ENCODE measurements at regions of chr11 and their contacts with region 1.

Region 1: GRCh38 chr11:33065445-33066178 is 26.2 kb downstream of the TCP11L1 start:
- DNase-seq: peak; percentile 95
- H3K4me3 ChIP-seq: no peak overlapping the region
- H3K27ac ChIP-seq: no peak overlapping the region
- H3K4me1 ChIP-seq: peaks cover 30% of the 10 kb centered on the region
- H3K27me3 ChIP-seq: no peaks in the 10 kb centered on the region
- CTCF ChIP-seq: peak; percentile 100

Region 2: GRCh38 chr11:32751381-32751780 is 314.2 kb before region 1 on chr11:
- CTCF ChIA-PET with region 1: interaction called, 3 read pairs
- POLR2A ChIA-PET with region 1: no interaction called
- intact Hi-C with region 1: loop called (anchors 2 kb)
- DNase-seq: no peak
- H3K4me3 ChIP-seq: no peak overlapping the region
- H3K27ac ChIP-seq: no peak overlapping the region
- H3K4me1 ChIP-seq: no peaks in the 10 kb centered on the region
- H3K27me3 ChIP-seq: peaks cover 8% of the 10 kb centered on the region
- CTCF ChIP-seq: no peak

Region 3: GRCh38 chr11:32809313-32809712 is 256.3 kb before region 1 on chr11:
- CTCF ChIA-PET with region 1: interaction called, 9 read pairs
- POLR2A ChIA-PET with region 1: no interaction called
- intact Hi-C with region 1: loop called (anchors 1 kb)
- DNase-seq: peak; percentile 94
- H3K4me3 ChIP-seq: no peak overlapping the region
- H3K27ac ChIP-seq: no peak overlapping the region
- H3K4me1 ChIP-seq: no peaks in the 10 kb centered on the region
- H3K27me3 ChIP-seq: no peaks in the 10 kb centered on the region
- CTCF ChIP-seq: peak; percentile 99

Region 4: GRCh38 chr11:32870676-32871075 is 194.9 kb before region 1 on chr11:
- CTCF ChIA-PET with region 1: no interaction called
- POLR2A ChIA-PET with region 1: no interaction called
- intact Hi-C with region 1: loop called (anchors 1 kb)
- DNase-seq: peak; percentile 77
- H3K4me3 ChIP-seq: no peak overlapping the region
- H3K27ac ChIP-seq: no peak overlapping the region
- H3K4me1 ChIP-seq: no peaks in the 10 kb centered on the region
- H3K27me3 ChIP-seq: peaks cover 12% of the 10 kb centered on the region
- CTCF ChIP-seq: peak; percentile 89

Region 5: GRCh38 chr11:32893343-32894148 is 172.1 kb before region 1 on chr11:
- CTCF ChIA-PET with region 1: interaction called, 6 read pairs
- POLR2A ChIA-PET with region 1: no interaction called
- intact Hi-C with region 1: loop called (anchors 5 kb)
- DNase-seq: peak; percentile 86
- H3K4me3 ChIP-seq: peak overlapping the region; percentile 77
- H3K27ac ChIP-seq: peak overlapping the region; percentile 85
- H3K4me1 ChIP-seq: peaks cover 32% of the 10 kb centered on the region
- H3K27me3 ChIP-seq: no peaks in the 10 kb centered on the region
- CTCF ChIP-seq: peak; percentile 81

Region 6: GRCh38 chr11:32960553-32961164 is 105.0 kb before region 1 on chr11:
- CTCF ChIA-PET with region 1: interaction called, 5 read pairs
- POLR2A ChIA-PET with region 1: no interaction called
- intact Hi-C with region 1: loop called (anchors 1 kb)
- DNase-seq: peak; percentile 87
- H3K4me3 ChIP-seq: no peak overlapping the region
- H3K27ac ChIP-seq: no peak overlapping the region
- H3K4me1 ChIP-seq: no peaks in the 10 kb centered on the region
- H3K27me3 ChIP-seq: no peaks in the 10 kb centered on the region
- CTCF ChIP-seq: peak; percentile 96

Region 7: GRCh38 chr11:33110083-33110482 is 44.5 kb after region 1 on chr11:
- CTCF ChIA-PET with region 1: no interaction called
- POLR2A ChIA-PET with region 1: interaction called, 10 read pairs
- intact Hi-C with region 1: no loop called
- DNase-seq: no peak
- H3K4me3 ChIP-seq: no peak overlapping the region
- H3K27ac ChIP-seq: no peak overlapping the region
- H3K4me1 ChIP-seq: no peaks in the 10 kb centered on the region
- H3K27me3 ChIP-seq: no peaks in the 10 kb centered on the region
- CTCF ChIP-seq: no peak

Measured in A673 (cell line).